Posterior cingulate gyrus (tissue), 11 donors: ENCODE measurements at regions of chr1 and their contacts with region 1.

Region 1: DNA sequence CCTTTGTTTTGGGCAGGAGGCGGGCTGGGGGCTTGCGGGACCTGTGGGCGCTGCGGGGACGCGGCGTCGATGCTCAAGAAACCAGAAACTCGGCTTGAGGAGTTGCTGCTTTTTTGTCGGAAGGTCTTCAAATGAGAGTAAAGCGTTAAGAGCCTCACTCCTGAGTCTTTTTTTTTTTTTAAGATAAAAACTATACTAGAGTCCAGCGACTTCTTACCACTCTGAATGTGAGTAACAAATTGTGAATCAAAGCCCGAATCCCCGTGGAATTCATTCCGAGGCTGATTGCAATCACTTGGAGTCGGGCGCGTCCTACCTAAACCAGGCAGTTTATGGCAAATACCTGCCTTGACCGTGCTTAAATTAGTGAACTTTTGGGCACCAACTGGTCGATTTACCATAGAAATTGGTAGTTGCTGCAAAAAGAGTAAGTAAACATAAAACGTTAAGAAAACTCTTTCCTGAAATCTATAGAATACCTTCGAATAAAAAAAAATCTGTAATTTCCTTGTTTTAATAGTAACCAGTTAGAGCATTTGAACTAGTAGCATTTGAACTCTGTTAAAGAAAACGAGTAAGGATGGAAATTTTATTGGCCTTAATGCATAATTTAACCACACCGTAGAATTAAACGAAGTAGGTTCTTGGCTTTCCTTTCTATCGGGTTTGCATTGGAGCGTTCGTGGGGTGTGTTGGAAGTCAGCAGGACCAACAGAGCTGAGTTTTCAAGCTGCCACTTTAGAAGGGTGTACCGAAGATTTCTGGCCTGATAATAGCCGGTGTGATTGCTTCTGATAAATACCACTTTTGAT is 769 bp downstream of the GPSM2 start:
- DNase-seq: peak in 2 of 10 donors; percentile 29 to 86

Region 2: GRCh38 chr1:108699375-108700332 is 177.9 kb before region 1 on chr1:
- intact Hi-C with region 1: loop called (anchors 5 kb)
- DNase-seq: no peak